ENCODE measurements at regions of chr15 and their contacts with region 1.

Region 1: GRCh38 chr15:44738340-44738984 is 2.1 kb downstream of the TRIM69 start:
- DNase-seq: no peak
- H3K4me3 Mint-ChIP-seq: peak overlapping the region; percentile 64
- H3K27ac Mint-ChIP-seq: peak overlapping the region; percentile 72
- H3K4me1 Mint-ChIP-seq: peaks cover 46% of the 10 kb centered on the region
- H3K27me3 Mint-ChIP-seq: no peaks in the 10 kb centered on the region

Region 2: GRCh38 chr15:44545913-44546802 is 192.3 kb before region 1 on chr15:
- CTCF ChIA-PET with region 1: interaction called, 13 read pairs
- POLR2A ChIA-PET with region 1: interaction called, 3 read pairs
- intact Hi-C with region 1: no loop called
- DNase-seq: peak; percentile 76
- H3K4me3 Mint-ChIP-seq: peak overlapping the region; percentile 35
- H3K27ac Mint-ChIP-seq: peak overlapping the region; percentile 74
- H3K4me1 Mint-ChIP-seq: peaks cover 50% of the 10 kb centered on the region
- H3K27me3 Mint-ChIP-seq: no peaks in the 10 kb centered on the region

Region 3: GRCh38 chr15:44593042-44593736 is 145.3 kb before region 1 on chr15:
- CTCF ChIA-PET with region 1: interaction called, 91 read pairs
- POLR2A ChIA-PET with region 1: interaction called, 6 read pairs
- intact Hi-C with region 1: loop called (anchors 1 kb)
- DNase-seq: peak; percentile 18
- H3K4me3 Mint-ChIP-seq: no peak overlapping the region
- H3K27ac Mint-ChIP-seq: no peak overlapping the region
- H3K4me1 Mint-ChIP-seq: peaks cover 24% of the 10 kb centered on the region
- H3K27me3 Mint-ChIP-seq: no peaks in the 10 kb centered on the region

Region 4: GRCh38 chr15:44663409-44664308 is 74.8 kb before region 1 on chr15 and contains the start of gene SPG11:
- CTCF ChIA-PET with region 1: interaction called, 209 read pairs
- POLR2A ChIA-PET with region 1: interaction called, 135 read pairs
- intact Hi-C with region 1: loop called (anchors 1 kb)
- DNase-seq: peak; percentile 99
- H3K4me3 Mint-ChIP-seq: peak within 1 kb of the TSS; percentile 97
- H3K27ac Mint-ChIP-seq: peak within 1 kb of the TSS; percentile 97
- H3K4me1 Mint-ChIP-seq: peaks cover 58% of the 10 kb centered on the region
- H3K27me3 Mint-ChIP-seq: no peaks in the 10 kb centered on the region
- total RNA-seq, gene SPG11: 84.6 to 86.8 TPM

Region 5: GRCh38 chr15:44682211-44682610 is 56.3 kb before region 1 on chr15:
- CTCF ChIA-PET with region 1: interaction called, 12 read pairs
- POLR2A ChIA-PET with region 1: interaction called, 25 read pairs
- intact Hi-C with region 1: no loop called
- DNase-seq: peak; percentile 32
- H3K4me3 Mint-ChIP-seq: peak overlapping the region; percentile 68
- H3K27ac Mint-ChIP-seq: peak overlapping the region; percentile 94
- H3K4me1 Mint-ChIP-seq: peaks cover 73% of the 10 kb centered on the region
- H3K27me3 Mint-ChIP-seq: no peaks in the 10 kb centered on the region

Region 6: DNA sequence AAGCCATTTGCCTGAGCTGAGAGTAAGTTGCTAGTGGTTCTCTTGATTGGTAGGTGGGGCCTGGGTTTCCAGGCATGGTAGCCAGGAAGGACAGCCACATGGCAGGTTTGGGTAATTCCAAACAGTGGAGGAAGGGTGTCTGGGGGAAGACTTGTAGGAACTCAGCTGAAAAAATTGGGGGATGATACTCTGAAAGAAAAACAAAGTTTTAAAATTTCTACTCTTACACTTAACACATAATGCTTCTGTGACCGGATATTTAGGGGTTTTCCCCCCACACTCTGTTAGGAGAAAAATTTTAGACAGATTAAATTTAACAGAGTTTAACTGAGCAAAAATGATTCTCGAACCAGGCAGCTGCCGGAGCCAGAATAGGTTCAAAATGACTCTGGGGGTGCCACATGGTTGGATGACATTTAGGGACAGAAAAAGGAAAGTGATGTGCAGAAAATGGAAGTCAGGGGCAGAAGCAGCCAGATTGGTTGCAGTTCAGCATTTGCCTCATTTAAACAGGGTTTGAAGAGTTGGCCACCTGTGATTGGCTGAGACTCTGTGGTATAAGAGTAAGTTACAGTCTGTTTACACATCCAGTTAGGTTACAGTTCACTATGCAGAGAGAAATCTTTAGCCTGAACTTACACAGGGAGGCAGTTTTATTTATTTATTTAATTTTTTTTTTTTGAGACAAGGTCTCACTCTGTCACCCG is 19.0 kb before region 1 on chr15:
- CTCF ChIA-PET with region 1: interaction called, 164 read pairs
- POLR2A ChIA-PET with region 1: interaction called, 1,161 read pairs
- intact Hi-C with region 1: loop called (anchors 2 kb)
- DNase-seq: peak; percentile 87
- H3K4me3 Mint-ChIP-seq: peak overlapping the region; percentile 47
- H3K27ac Mint-ChIP-seq: peak overlapping the region; percentile 92
- H3K4me1 Mint-ChIP-seq: peaks cover 89% of the 10 kb centered on the region
- H3K27me3 Mint-ChIP-seq: no peaks in the 10 kb centered on the region

Region 7: GRCh38 chr15:44812029-44812517 is 73.6 kb after region 1 on chr15:
- CTCF ChIA-PET with region 1: no interaction called
- POLR2A ChIA-PET with region 1: no interaction called
- intact Hi-C with region 1: no loop called
- DNase-seq: no peak
- H3K4me3 Mint-ChIP-seq: no peak overlapping the region
- H3K27ac Mint-ChIP-seq: no peak overlapping the region
- H3K4me1 Mint-ChIP-seq: peaks cover 5% of the 10 kb centered on the region
- H3K27me3 Mint-ChIP-seq: peaks cover 5% of the 10 kb centered on the region

Region 8: GRCh38 chr15:44882499-44882968 is 144.1 kb after region 1 on chr15:
- CTCF ChIA-PET with region 1: no interaction called
- POLR2A ChIA-PET with region 1: no interaction called
- intact Hi-C with region 1: no loop called
- DNase-seq: peak; percentile 82
- H3K4me3 Mint-ChIP-seq: peak overlapping the region; percentile 8
- H3K27ac Mint-ChIP-seq: peak overlapping the region; percentile 59
- H3K4me1 Mint-ChIP-seq: peaks cover 34% of the 10 kb centered on the region
- H3K27me3 Mint-ChIP-seq: peaks cover 11% of the 10 kb centered on the region

Measured in activated CD4-positive, alpha-beta memory T cell treated with anti-CD3 and anti-CD28 coated beads for 36 hours (primary cell).